MCF 10A (cell line): ENCODE measurements at regions of chr2 and their contacts with region 1.

Region 1: GRCh38 chr2:84925724-84926376 is 20.4 kb downstream of the TMSB10 start:
- DNase-seq: peak; percentile 97
- H3K4me3 Mint-ChIP-seq: peak overlapping the region; percentile 71
- H3K27ac Mint-ChIP-seq: peak overlapping the region; percentile 28
- H3K4me1 Mint-ChIP-seq: peaks cover 32% of the 10 kb centered on the region
- H3K27me3 Mint-ChIP-seq: no peaks in the 10 kb centered on the region
- CTCF ChIP-seq: peak; percentile 96

Region 2: DNA sequence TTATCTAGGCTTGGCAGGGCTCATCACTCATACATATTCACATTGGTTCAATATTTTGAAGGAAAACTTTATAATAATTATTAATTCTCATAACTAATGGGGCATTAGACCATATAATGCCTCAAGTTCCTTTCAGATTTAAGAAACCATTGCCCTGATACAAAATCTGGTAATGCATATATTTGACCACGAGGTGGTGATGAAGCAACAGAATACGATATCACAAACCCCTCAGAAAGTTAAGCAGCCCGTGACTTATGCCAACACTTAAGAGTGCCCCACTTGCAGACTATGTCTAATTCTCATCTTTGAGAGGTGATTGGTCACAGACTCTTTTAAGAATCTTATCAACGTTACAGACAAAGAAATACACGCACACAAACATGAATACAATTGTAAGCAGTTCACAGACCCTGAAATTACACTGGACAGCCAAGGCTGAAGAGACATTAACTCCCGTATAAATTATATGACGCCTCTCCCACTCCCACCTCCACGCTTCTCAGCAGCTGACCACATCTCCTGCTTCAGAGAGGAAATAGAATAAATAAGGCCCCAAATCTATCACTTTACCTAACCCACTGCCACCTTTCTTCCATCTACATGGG is 430.2 kb before region 1 on chr2:
- CTCF ChIA-PET with region 1: interaction called, 4 read pairs
- POLR2A ChIA-PET with region 1: no interaction called
- intact Hi-C with region 1: loop called (anchors 1 kb)
- DNase-seq: peak; percentile 72
- H3K4me3 Mint-ChIP-seq: no peak overlapping the region
- H3K27ac Mint-ChIP-seq: peak overlapping the region; percentile 35
- H3K4me1 Mint-ChIP-seq: peaks cover 21% of the 10 kb centered on the region
- H3K27me3 Mint-ChIP-seq: no peaks in the 10 kb centered on the region
- CTCF ChIP-seq: peak; percentile 53

Region 3: GRCh38 chr2:84881581-84882414 is 44.1 kb before region 1 on chr2:
- CTCF ChIA-PET with region 1: interaction called, 21 read pairs
- POLR2A ChIA-PET with region 1: interaction called, 25 read pairs
- intact Hi-C with region 1: loop called (anchors 1 kb)
- DNase-seq: peak; percentile 88
- H3K4me3 Mint-ChIP-seq: peak overlapping the region; percentile 88
- H3K27ac Mint-ChIP-seq: peak overlapping the region; percentile 52
- H3K4me1 Mint-ChIP-seq: peaks cover 17% of the 10 kb centered on the region
- H3K27me3 Mint-ChIP-seq: no peaks in the 10 kb centered on the region
- CTCF ChIP-seq: peak; percentile 47

Region 4: DNA sequence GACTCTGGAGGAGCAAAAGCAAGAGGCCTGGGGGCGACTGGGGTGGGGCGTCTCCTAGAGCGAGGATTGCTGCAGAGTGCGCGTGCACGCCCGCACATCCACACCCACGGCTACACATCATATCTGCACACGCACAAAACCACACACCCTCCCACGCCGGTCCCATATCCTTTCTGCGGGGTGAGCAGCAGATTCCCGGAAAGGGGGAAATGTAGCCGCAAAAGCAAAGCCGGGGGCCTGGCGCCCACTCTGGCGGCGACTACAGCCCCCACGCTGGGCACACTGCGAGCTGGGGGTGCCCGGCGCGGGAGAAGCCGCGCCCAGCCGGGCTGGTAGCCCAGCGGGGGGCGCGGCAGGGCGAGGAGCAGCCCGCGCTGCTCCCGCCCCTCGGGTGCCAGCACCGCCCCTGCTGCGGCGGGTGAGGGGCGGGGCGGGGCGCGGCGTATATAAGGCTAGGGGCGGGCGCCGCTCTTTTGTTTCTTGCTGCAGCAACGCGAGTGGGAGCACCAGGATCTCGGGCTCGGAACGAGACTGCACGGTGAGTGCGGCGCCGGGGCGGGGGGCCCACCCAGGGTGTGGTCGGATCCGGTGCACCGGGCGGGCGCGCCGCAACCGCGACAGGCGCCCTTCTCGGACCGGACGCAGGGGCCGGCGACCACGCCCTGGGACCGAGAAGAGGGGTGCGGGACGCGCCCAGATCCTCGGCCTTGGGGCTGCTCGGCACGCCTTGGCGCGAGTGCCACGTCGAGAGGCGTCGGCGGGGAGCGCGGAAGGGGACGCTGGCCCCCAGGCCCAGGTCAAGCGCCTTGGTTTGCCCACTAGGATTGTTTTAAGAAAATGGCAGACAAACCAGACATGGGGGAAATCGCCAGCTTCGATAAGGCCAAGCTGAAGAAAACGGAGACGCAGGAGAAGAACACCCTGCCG is 20.4 kb before region 1 on chr2 and contains the start of gene TMSB10:
- CTCF ChIA-PET with region 1: interaction called, 39 read pairs
- POLR2A ChIA-PET with region 1: interaction called, 189 read pairs
- intact Hi-C with region 1: loop called (anchors 1 kb)
- DNase-seq: peak; percentile 87
- H3K4me3 Mint-ChIP-seq: peak within 1 kb of the TSS; percentile 85
- H3K27ac Mint-ChIP-seq: peak within 1 kb of the TSS; percentile 83
- H3K4me1 Mint-ChIP-seq: peaks cover 29% of the 10 kb centered on the region
- H3K27me3 Mint-ChIP-seq: no peaks in the 10 kb centered on the region
- CTCF ChIP-seq: peak; percentile 10
- total RNA-seq, gene TMSB10: 3,313 and 3,349 TPM in 2 replicates

Region 5: DNA sequence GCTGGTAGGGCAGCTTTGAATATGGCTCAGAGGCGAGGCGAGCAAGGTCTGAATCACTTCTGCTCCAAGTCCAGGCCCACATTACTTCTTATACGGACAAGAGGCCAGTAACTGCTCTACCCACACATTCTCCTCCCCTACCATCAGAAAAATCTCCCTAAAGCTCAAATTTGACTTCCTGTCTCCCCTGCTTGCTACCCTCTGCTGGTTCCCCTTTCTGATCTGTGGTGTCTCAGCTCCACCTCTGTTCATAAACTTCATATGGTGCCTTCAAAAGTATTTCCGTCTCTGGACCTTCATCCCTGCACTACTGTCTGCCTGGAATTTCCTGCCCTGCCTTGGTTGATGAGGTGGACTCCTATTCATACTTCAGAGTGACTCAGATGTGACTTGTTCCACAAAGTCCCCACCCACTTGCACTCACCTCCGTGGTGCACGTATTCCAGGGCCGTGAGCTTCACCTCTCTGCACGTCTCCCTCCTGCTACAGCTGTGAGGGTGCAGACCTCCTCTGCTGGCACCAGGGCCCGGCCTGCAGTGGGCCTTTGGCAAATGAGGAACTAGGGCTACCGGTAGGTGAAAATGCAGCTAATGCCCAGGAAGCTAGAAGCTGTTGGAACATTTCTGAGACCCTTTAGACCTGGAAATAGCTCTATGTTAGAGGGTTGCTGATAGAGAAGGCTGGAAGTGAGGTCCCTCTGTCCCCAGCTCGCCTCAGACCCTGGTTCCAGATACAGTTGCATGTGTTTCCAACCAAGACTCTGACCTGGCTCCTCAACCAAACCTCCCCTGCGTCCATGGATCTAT is 20.6 kb after region 1 on chr2:
- CTCF ChIA-PET with region 1: interaction called, 64 read pairs
- POLR2A ChIA-PET with region 1: interaction called, 19 read pairs
- intact Hi-C with region 1: no loop called
- DNase-seq: peak; percentile 85
- H3K4me3 Mint-ChIP-seq: peak overlapping the region; percentile 8
- H3K27ac Mint-ChIP-seq: peak overlapping the region; percentile 89
- H3K4me1 Mint-ChIP-seq: peaks cover 13% of the 10 kb centered on the region
- H3K27me3 Mint-ChIP-seq: no peaks in the 10 kb centered on the region
- CTCF ChIP-seq: no peak

Region 6: GRCh38 chr2:85002534-85002933 is 76.7 kb after region 1 on chr2:
- CTCF ChIA-PET with region 1: interaction called, 11 read pairs
- POLR2A ChIA-PET with region 1: interaction called, 11 read pairs
- intact Hi-C with region 1: no loop called
- DNase-seq: no peak
- H3K4me3 Mint-ChIP-seq: no peak overlapping the region
- H3K27ac Mint-ChIP-seq: no peak overlapping the region
- H3K4me1 Mint-ChIP-seq: peaks cover 5% of the 10 kb centered on the region
- H3K27me3 Mint-ChIP-seq: no peaks in the 10 kb centered on the region
- CTCF ChIP-seq: no peak

Region 7: GRCh38 chr2:85282914-85283313 is 357.1 kb after region 1 on chr2:
- CTCF ChIA-PET with region 1: interaction called, 18 read pairs
- POLR2A ChIA-PET with region 1: interaction called, 7 read pairs
- intact Hi-C with region 1: loop called (anchors 1 kb)
- DNase-seq: no peak
- H3K4me3 Mint-ChIP-seq: no peak overlapping the region
- H3K27ac Mint-ChIP-seq: no peak overlapping the region
- H3K4me1 Mint-ChIP-seq: peaks cover 18% of the 10 kb centered on the region
- H3K27me3 Mint-ChIP-seq: no peaks in the 10 kb centered on the region
- CTCF ChIP-seq: no peak